ENCODE measurements at regions of chr4 and their contacts with region 1.

Region 1: DNA sequence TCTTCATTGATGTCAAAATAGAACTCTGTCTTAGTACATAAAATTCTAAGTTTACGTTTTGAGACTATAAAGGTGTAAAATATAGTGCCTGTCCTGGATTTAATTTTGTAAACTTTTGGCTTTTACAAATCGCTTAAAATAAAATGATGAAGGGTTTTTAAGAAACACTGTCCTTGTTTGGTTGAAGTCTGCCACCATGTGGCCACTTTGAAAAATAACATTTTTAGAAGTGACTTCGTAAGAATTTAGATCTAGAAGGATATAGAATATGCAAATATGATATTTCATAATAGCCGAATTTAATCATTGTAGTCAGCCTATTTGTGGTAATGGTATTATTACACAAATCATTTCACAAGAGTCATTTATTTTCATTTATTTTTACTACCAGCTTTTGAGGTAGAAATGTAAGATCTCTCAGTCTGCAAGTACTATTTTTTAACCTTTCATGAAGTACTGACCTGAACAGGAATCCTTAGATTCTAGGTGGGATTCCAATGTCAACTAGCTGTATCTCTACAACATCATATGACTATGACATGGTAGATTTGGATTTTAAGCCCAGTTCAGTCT is 31.0 kb upstream of the FAT4 start:
- DNase-seq: no peak
- H3K4me3 Mint-ChIP-seq: no peak overlapping the region
- H3K27ac Mint-ChIP-seq: no peak overlapping the region
- H3K4me1 Mint-ChIP-seq: no peaks in the 10 kb centered on the region
- H3K27me3 Mint-ChIP-seq: no peaks in the 10 kb centered on the region

Region 2: DNA sequence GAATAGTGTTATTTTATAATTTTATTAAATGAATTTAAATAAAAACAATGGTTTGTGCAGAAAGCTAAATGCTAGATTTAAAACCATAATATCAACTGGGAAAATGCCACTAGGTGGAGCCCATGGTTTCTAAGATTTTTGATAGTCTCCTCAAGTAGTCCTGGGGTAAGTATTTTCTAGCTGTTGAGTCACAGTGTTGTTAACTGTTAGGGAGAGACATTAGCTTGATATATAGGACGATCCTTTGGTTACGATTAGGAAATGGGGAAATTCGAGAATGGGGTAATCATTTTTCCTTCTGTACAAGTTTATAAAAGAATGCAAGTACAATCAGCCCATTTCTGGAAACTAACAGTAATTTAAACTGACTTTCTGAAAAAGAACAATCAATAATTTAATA is 949.7 kb before region 1 on chr4:
- CTCF ChIA-PET with region 1: interaction called, 26 read pairs
- DNase-seq: no peak
- H3K4me3 Mint-ChIP-seq: no peak overlapping the region
- H3K27ac Mint-ChIP-seq: no peak overlapping the region
- H3K4me1 Mint-ChIP-seq: no peaks in the 10 kb centered on the region
- H3K27me3 Mint-ChIP-seq: no peaks in the 10 kb centered on the region

Region 3: DNA sequence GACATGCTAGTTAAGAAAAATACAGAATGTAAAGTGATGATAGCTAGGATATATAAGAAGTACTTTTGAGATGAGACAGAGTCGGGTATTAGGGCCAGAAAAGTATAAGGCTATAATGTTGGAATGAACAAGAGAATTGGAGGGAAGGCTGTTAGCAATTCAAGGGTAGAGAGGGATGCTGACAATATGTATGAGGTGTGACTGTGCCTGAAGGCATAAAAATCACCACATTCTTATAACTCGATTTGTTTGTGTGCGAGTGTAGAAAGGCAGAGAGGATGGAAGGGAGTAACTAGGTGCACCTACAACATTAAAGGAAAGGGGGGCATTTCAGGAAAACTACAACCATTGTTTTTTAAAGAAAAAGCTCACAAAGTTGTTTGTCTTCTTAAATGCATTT is 117.0 kb after region 1 on chr4:
- CTCF ChIA-PET with region 1: no interaction called
- DNase-seq: no peak
- H3K4me3 Mint-ChIP-seq: no peak overlapping the region
- H3K27ac Mint-ChIP-seq: no peak overlapping the region
- H3K4me1 Mint-ChIP-seq: no peaks in the 10 kb centered on the region
- H3K27me3 Mint-ChIP-seq: no peaks in the 10 kb centered on the region